ENCODE measurements at regions of chr1 and their contacts with region 1.

Region 1: GRCh38 chr1:226634166-226634588 is 85.6 kb downstream of the STUM start:
- DNase-seq: peak; percentile 35
- ATAC-seq: peak; percentile 95
- H3K4me3 ChIP-seq: no peak overlapping the region
- H3K27ac ChIP-seq: no peak overlapping the region
- H3K4me1 ChIP-seq: no peaks in the 10 kb centered on the region; the same call in 1 of the 2 replicates
- H3K27me3 ChIP-seq: no peaks in the 10 kb centered on the region
- CTCF ChIP-seq: peak; percentile 97

Region 2: GRCh38 chr1:226827968-226828513 is 193.9 kb after region 1 on chr1:
- CTCF ChIA-PET with region 1: interaction called, 8 read pairs
- POLR2A ChIA-PET with region 1: no interaction called
- in situ Hi-C with region 1: no loop called
- intact Hi-C with region 1: loop called (anchors 2 kb)
- DNase-seq: peak; percentile 67
- ATAC-seq: peak; percentile 100
- H3K4me3 ChIP-seq: peak overlapping the region in 1 of 2 experiments; percentile 23; a peak in 1 of 4 replicates
- H3K27ac ChIP-seq: peak overlapping the region; percentile 73; the same call in 1 of the 2 replicates
- H3K4me1 ChIP-seq: peaks cover 4% of the 10 kb centered on the region
- H3K27me3 ChIP-seq: no peaks in the 10 kb centered on the region
- CTCF ChIP-seq: peak; percentile 95